ENCODE measurements at regions of chr9 and their contacts with region 1.

Region 1: DNA sequence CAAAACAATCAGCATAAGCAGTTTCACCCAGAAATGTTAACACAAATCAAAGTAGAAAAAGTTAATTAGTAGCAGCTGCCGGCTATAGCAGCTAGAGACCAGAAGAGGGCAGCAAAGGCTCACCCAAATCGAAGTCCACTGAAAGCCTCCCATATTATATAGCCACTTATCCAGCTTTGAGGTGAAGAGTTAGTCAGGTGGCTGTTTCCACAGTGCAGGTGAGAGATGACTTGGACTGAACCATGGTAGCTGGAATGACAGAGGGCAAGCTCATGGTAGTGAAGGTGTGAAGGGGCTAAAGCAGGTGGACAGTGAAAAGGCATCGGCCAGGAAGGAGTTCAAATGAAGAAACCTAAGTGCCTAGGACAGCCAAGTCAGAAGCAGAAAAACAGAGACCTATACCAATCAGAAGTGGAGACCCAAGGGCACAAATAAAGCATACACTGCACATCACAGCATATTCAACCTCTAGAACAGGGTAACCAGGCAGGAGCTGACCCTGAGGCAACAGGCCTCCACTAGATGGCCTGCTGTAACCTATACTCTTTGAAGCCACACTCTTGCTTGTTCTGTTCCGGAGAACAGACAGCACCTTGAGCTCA is 7.2 kb upstream of the RNF38 start:
- DNase-seq: peak; percentile 74
- ATAC-seq: peak; percentile 89
- H3K4me3 Mint-ChIP-seq: no peak overlapping the region
- H3K27ac Mint-ChIP-seq: peak overlapping the region; percentile 38
- H3K4me1 Mint-ChIP-seq: peaks cover 14% of the 10 kb centered on the region
- H3K27me3 Mint-ChIP-seq: no peaks in the 10 kb centered on the region

Region 2: DNA sequence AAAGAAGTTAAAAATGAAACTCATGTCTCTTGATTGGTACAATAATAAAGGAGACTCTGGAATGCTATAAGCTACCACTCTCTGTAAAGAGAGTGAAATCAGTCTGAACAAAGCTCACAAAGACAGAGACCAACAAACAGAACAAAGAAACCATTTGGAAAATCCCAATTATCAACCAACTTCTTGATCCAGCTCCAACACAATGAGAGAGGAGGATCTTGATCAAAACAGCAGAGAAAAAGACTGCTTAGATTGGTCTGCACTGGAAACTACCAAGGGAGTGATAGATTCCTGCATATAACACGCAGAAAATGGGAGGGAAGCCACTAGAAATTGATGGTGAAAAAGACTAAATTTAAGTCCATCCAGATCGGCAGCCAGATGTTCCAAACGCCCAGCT is 16.0 kb after region 1 on chr9:
- CTCF ChIA-PET with region 1: interaction called, 22 read pairs
- POLR2A ChIA-PET with region 1: no interaction called
- intact Hi-C with region 1: no loop called
- DNase-seq: no peak
- ATAC-seq: no peak
- H3K4me3 Mint-ChIP-seq: no peak overlapping the region
- H3K27ac Mint-ChIP-seq: no peak overlapping the region
- H3K4me1 Mint-ChIP-seq: peaks cover 17% of the 10 kb centered on the region
- H3K27me3 Mint-ChIP-seq: no peaks in the 10 kb centered on the region

Region 3: GRCh38 chr9:36441966-36442365 is 34.7 kb after region 1 on chr9:
- CTCF ChIA-PET with region 1: interaction called, 19 read pairs
- POLR2A ChIA-PET with region 1: interaction called, 4 read pairs
- intact Hi-C with region 1: no loop called
- DNase-seq: no peak
- ATAC-seq: no peak
- H3K4me3 Mint-ChIP-seq: no peak overlapping the region
- H3K27ac Mint-ChIP-seq: no peak overlapping the region
- H3K4me1 Mint-ChIP-seq: peaks cover 43% of the 10 kb centered on the region
- H3K27me3 Mint-ChIP-seq: no peaks in the 10 kb centered on the region

Region 4: DNA sequence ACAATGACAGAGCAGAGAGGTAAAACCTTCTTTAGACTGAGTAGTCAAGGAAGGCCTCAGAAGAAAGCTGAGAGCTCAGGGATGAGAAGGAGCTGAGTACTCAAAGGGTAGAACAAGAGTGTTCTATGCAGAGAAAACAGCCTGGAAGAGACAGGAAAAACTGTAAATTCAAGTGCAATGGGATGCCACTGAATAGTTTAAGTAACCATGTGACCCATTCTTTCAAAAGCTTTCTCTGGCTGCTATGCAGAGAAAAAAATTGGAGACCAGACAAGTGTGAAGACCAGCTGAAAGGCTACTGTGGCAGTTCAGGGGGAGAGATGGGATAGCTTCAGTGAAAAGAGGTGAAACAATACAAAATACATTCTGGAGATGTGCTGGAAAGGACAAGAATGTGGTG is 54.1 kb after region 1 on chr9:
- CTCF ChIA-PET with region 1: interaction called, 23 read pairs
- POLR2A ChIA-PET with region 1: interaction called, 3 read pairs
- intact Hi-C with region 1: no loop called
- DNase-seq: no peak
- ATAC-seq: no peak
- H3K4me3 Mint-ChIP-seq: no peak overlapping the region
- H3K27ac Mint-ChIP-seq: no peak overlapping the region
- H3K4me1 Mint-ChIP-seq: peaks cover 56% of the 10 kb centered on the region
- H3K27me3 Mint-ChIP-seq: no peaks in the 10 kb centered on the region

Region 5: GRCh38 chr9:36501727-36502126 is 94.5 kb after region 1 on chr9:
- CTCF ChIA-PET with region 1: interaction called, 10 read pairs
- POLR2A ChIA-PET with region 1: no interaction called
- intact Hi-C with region 1: no loop called
- DNase-seq: no peak
- ATAC-seq: no peak
- H3K4me3 Mint-ChIP-seq: no peak overlapping the region
- H3K27ac Mint-ChIP-seq: no peak overlapping the region
- H3K4me1 Mint-ChIP-seq: peaks cover 17% of the 10 kb centered on the region
- H3K27me3 Mint-ChIP-seq: no peaks in the 10 kb centered on the region

Region 6: DNA sequence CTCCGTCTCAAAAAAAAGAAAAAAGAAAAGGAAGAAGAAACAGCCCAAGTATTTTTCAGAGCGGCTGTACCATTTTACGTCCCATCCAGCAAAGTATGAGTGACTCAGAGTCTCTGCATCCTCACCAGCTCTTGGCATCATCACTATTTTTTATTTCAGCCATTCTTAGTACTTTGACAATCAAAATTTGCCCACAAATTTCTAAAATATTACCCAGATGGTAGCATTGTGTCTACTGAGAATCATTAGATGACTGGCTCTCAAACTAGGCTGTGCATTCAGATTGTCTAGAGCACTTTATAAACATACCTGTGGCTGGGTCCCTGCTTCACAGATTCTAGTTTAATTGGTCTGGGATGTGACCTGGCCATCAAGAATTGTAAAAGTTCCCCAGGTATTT is 143.9 kb after region 1 on chr9:
- CTCF ChIA-PET with region 1: interaction called, 285 read pairs
- POLR2A ChIA-PET with region 1: no interaction called
- intact Hi-C with region 1: loop called (anchors 1 kb)
- DNase-seq: no peak
- ATAC-seq: no peak
- H3K4me3 Mint-ChIP-seq: no peak overlapping the region
- H3K27ac Mint-ChIP-seq: no peak overlapping the region
- H3K4me1 Mint-ChIP-seq: no peaks in the 10 kb centered on the region
- H3K27me3 Mint-ChIP-seq: peaks cover 6% of the 10 kb centered on the region

Region 7: DNA sequence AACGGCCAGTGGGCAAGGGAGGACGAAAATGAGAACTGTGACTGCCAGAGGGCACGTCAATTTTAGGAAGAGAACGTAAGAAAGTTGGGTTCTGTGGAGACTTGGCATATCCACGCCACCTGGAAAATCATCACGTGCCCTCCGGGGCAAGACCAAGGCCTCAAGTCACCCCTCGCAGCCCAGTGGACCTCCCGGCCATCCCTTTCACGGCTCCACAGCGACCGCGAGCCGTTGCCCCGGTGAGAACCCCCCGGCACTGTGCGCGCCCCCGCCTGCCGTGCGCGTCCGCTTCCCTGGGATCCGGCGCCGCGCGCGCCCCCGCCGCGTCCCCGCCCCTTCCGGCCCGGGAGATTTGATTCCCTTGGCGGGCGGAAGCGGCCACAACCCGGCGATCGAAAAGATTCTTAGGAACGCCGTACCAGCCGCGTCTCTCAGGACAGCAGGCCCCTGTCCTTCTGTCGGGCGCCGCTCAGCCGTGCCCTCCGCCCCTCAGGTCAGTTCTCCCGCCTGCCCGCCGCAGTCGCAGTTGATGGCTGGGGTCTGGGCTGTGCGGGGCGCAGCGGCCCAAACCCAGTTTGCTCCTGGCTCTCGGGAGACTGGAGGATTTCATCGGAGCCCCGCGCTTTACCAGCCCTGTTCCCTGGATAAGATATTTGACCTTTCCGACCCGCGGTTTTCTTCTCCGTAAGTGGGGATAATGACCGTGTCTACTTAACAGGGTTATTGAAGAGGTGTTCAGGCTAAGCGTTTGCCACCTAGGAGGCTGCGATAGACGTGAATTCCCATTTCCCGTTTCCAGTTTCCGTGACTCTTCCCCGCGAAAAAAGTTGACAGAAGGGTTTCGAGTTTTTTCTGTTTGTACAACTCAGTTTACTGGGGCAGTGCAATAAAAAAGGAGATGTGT is 165.5 kb after region 1 on chr9 and contains the start of gene MELK:
- CTCF ChIA-PET with region 1: interaction called, 8 read pairs
- POLR2A ChIA-PET with region 1: no interaction called
- intact Hi-C with region 1: loop called in 1 of 2 experiments (anchors 5 kb)
- DNase-seq: peak; percentile 89
- ATAC-seq: peak; percentile 73
- H3K4me3 Mint-ChIP-seq: peak within 1 kb of the TSS; percentile 97
- H3K27ac Mint-ChIP-seq: peak within 1 kb of the TSS; percentile 85
- H3K4me1 Mint-ChIP-seq: peaks cover 27% of the 10 kb centered on the region
- H3K27me3 Mint-ChIP-seq: no peaks in the 10 kb centered on the region
- total RNA-seq, gene MELK: 63.9 to 66.1 TPM

Measured in activated CD4-positive, alpha-beta T cell treated with anti-CD3 and anti-CD28 coated beads for 36 hours (primary cell).